ENCODE measurements at regions of chr15 and their contacts with region 1.

Region 1: DNA sequence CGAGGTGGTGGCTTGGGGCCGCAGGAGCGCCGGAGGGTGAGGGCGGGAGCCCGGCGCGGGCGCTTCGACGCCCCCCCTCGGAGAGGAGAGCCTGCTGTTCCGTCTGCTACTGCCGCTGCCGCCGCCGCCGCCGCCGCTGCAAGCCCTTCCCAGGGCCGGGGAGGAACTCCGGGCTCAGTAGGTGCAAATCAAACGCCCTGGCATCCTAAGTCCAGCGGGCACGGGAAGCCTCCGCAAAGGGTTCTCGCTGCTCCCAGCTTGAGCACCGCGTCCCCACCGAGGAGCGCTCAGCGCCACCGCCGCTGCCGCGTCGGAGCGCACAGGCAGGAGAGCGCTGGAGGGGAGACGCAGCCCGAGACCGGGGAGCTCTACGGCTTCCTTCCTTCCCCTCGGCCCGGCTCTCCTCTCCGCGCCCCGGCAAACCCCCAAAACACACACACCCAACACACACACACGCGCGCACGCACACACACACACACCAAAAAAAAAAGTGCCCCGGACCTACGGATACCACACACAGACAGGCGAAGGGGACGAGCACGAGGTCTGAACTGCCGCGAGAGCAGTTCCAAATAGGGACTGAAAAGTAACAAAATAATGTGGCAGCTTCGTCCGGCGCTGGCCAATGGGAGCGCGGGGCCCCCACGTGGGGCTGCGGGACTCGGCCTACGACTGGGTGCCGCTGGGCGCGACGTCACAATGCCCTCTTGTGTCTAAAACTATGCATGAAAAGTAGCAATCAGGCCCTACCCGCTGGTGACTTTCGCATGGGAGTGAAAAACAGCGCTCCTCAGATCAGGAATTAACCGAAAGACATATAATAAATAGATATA is at the start of gene TLE3:
- DNase-seq: peak; percentile 92
- ATAC-seq: peak; percentile 71
- H3K4me3 ChIP-seq: peak within 1 kb of the TSS; percentile 84 to 92
- H3K27ac ChIP-seq: peak within 1 kb of the TSS; percentile 89
- H3K4me1 ChIP-seq: peaks cover 42% of the 10 kb centered on the region
- H3K27me3 ChIP-seq: no peaks in the 10 kb centered on the region
- CTCF ChIP-seq: peak; percentile 52
- total RNA-seq, gene TLE3: 132 TPM

Region 2: GRCh38 chr15:69576035-69576526 is 521.5 kb before region 1 on chr15:
- CTCF ChIA-PET with region 1: no interaction called
- POLR2A ChIA-PET with region 1: no interaction called
- in situ Hi-C with region 1: no loop called
- intact Hi-C with region 1: loop called (anchors 10 kb)
- DNase-seq: no peak
- ATAC-seq: peak; percentile 93
- H3K4me3 ChIP-seq: no peak overlapping the region
- H3K27ac ChIP-seq: peak overlapping the region; percentile 75; the same call in 1 of the 2 replicates
- H3K4me1 ChIP-seq: peaks cover 24% of the 10 kb centered on the region
- H3K27me3 ChIP-seq: no peaks in the 10 kb centered on the region
- CTCF ChIP-seq: peak; percentile 89

Region 3: GRCh38 chr15:70111203-70112073 is 13.9 kb after region 1 on chr15:
- CTCF ChIA-PET with region 1: interaction called, 8 read pairs
- POLR2A ChIA-PET with region 1: no interaction called
- in situ Hi-C with region 1: no loop called
- intact Hi-C with region 1: loop called (anchors 1 kb)
- DNase-seq: no peak
- ATAC-seq: peak; percentile 93
- H3K4me3 ChIP-seq: no peak overlapping the region
- H3K27ac ChIP-seq: peak overlapping the region; percentile 60; the same call in 1 of the 2 replicates
- H3K4me1 ChIP-seq: peaks cover 8% of the 10 kb centered on the region; the same call in 1 of the 2 replicates
- H3K27me3 ChIP-seq: no peaks in the 10 kb centered on the region
- CTCF ChIP-seq: no peak

Region 4: DNA sequence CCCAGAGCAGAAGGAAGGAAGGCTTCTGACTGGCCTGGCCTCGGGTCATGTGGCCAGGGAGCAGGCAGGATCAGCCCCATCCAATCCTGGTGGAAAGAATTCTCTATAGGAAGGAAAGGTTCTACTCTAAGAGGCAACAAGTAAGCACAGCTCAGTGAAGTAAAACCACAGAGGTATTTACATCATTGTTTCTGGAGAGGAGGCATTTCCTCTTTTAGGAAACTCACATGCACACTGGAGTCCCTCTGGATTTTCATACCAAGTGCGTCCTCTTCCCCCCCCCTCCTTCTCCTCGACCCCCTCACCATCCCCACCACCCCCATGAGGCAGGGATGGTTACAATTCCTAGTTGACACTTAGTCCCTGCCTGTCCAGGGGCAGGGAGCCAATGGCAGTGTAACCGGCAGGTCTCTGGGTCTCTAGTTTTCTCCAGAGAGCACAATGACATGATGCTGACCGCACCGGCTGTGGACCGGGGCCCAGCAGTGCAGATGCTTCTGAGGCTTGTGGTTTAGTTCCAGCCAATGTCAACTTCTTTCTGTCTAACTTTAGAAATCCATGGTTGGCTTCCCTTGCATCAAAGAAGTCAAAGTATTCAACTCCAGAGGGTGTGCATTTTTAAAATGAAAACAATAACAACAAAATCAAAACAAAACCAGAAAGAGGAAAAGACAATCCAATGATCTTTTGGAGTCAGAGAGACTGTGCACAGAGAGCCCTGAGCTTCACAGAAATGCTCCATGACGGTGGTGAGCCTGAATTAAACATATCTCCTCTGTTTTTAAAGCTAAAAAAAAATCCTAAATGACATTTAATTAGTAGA is 230.5 kb after region 1 on chr15:
- CTCF ChIA-PET with region 1: no interaction called
- POLR2A ChIA-PET with region 1: no interaction called
- in situ Hi-C with region 1: no loop called
- intact Hi-C with region 1: no loop called
- DNase-seq: no peak
- ATAC-seq: peak; percentile 81
- H3K4me3 ChIP-seq: no peak overlapping the region
- H3K27ac ChIP-seq: 0 out of 2 replicates have a peak overlapping the region, but pooled peaks have one; percentile 3
- H3K4me1 ChIP-seq: peaks cover 23% of the 10 kb centered on the region
- H3K27me3 ChIP-seq: no peaks in the 10 kb centered on the region
- CTCF ChIP-seq: no peak

Region 5: DNA sequence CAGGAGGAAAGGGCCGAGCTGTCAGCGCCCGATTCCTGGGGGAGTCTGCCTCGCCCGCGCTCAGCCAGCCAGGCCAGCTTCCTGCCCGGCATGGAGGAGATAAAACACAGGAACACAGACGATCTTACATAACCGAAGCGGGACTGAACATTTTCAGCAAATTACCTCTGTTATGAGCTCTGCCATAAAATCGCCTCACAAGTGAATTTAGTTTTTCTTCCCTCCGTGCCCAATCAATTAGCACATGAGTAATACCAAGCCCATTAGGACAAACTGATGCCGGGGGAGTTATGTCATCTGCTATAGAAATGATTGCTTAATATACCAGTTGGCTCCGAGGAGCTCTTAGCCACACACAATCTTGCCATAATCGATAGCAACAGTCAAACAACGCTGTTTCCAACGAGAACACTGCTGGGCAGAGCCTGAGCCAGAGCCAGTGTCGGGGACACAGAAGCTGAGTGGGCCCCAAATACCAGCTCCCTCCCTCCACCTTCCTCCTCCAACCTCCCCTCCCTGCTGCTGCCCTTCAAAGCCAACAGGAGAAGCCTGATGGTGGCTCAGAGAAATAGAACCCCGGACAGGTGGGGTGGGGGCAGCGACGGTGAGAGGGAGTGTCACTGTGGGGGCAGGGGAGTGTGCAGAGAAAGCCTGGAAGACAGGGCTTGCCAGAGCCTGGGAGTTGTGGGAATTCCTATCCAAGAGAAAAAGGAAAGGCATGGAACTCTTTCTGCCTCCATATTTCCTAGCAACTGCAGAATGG is 279.6 kb after region 1 on chr15:
- CTCF ChIA-PET with region 1: no interaction called
- POLR2A ChIA-PET with region 1: interaction called, 10 read pairs
- in situ Hi-C with region 1: no loop called
- intact Hi-C with region 1: no loop called
- DNase-seq: no peak
- ATAC-seq: no peak
- H3K4me3 ChIP-seq: peak overlapping the region in 1 of 2 experiments; percentile 17; a peak in 1 of 4 replicates
- H3K27ac ChIP-seq: peak overlapping the region; percentile 57
- H3K4me1 ChIP-seq: peaks cover 44% of the 10 kb centered on the region
- H3K27me3 ChIP-seq: no peaks in the 10 kb centered on the region
- CTCF ChIP-seq: no peak

Region 6: DNA sequence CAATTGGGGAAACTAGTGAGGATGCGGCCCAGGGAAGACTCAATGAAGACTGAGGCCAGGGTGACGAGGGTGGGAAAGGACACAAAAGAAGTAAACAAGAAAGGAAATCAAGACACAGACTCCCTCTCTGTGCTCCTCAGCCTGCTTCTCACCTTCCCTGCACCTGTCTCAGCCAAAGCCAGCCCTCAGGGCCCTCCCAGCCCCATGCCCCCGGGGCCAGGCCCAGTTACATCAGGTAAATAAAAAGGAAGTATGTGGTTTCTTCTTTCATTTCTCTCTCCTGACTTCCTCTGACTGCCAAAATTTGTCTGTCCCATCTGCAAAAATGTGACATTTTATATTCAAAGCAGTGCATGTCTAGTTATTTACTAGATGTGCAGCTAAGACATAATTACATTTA is 337.8 kb after region 1 on chr15:
- CTCF ChIA-PET with region 1: no interaction called
- POLR2A ChIA-PET with region 1: interaction called, 18 read pairs
- in situ Hi-C with region 1: no loop called
- intact Hi-C with region 1: no loop called
- DNase-seq: no peak
- ATAC-seq: no peak
- H3K4me3 ChIP-seq: no peak overlapping the region
- H3K27ac ChIP-seq: peak overlapping the region; percentile 65; the same call in 1 of the 2 replicates
- H3K4me1 ChIP-seq: peaks cover 18% of the 10 kb centered on the region
- H3K27me3 ChIP-seq: no peaks in the 10 kb centered on the region
- CTCF ChIP-seq: no peak

Region 7: GRCh38 chr15:70466895-70467529 is 369.5 kb after region 1 on chr15:
- CTCF ChIA-PET with region 1: interaction called, 6 read pairs
- POLR2A ChIA-PET with region 1: interaction called, 3 read pairs
- in situ Hi-C with region 1: no loop called
- intact Hi-C with region 1: loop called (anchors 10 kb)
- DNase-seq: no peak
- ATAC-seq: peak; percentile 88
- H3K4me3 ChIP-seq: no peak overlapping the region
- H3K27ac ChIP-seq: peak overlapping the region; percentile 99
- H3K4me1 ChIP-seq: peaks cover 45% of the 10 kb centered on the region
- H3K27me3 ChIP-seq: no peaks in the 10 kb centered on the region
- CTCF ChIP-seq: peak; percentile 88

Region 8: DNA sequence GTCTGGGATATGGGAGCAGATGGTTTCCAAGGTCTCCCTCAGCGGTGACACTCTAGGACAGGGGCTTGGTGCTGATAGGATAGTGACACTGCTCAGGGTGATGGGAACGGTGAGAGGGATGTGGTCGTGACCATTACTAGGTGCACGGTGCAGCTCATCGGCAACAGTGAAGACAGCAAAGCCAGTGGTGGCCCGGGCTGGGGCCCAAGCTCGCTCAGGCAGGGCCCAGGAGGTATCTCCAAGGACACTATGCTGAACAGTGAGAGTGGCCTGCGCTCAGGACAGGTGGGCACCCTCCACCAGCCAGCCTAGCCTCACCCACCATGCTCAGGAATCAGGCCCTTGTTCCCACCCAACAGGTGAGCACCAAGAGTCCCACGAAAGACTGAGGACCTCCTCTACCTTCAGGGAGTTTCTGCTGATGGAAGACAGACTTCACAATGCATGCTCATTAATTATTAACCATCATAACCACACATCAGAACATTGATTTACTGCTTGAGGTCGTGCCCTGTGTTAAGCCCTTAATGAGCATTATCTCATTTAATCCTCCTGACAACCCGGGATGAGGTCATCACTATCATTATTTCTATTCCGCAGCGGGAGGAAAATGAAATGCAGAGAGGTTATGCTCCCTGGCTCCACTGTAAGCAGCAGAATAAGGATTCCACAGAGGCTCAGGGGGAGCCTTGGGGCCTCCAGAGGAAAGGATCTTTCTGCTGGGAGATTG is 396.4 kb after region 1 on chr15:
- CTCF ChIA-PET with region 1: no interaction called
- POLR2A ChIA-PET with region 1: interaction called, 12 read pairs
- in situ Hi-C with region 1: no loop called
- intact Hi-C with region 1: no loop called
- DNase-seq: no peak
- ATAC-seq: peak; percentile 8
- H3K4me3 ChIP-seq: no peak overlapping the region
- H3K27ac ChIP-seq: peak overlapping the region; percentile 92
- H3K4me1 ChIP-seq: peaks cover 69% of the 10 kb centered on the region
- H3K27me3 ChIP-seq: no peaks in the 10 kb centered on the region
- CTCF ChIP-seq: no peak

Region 9: DNA sequence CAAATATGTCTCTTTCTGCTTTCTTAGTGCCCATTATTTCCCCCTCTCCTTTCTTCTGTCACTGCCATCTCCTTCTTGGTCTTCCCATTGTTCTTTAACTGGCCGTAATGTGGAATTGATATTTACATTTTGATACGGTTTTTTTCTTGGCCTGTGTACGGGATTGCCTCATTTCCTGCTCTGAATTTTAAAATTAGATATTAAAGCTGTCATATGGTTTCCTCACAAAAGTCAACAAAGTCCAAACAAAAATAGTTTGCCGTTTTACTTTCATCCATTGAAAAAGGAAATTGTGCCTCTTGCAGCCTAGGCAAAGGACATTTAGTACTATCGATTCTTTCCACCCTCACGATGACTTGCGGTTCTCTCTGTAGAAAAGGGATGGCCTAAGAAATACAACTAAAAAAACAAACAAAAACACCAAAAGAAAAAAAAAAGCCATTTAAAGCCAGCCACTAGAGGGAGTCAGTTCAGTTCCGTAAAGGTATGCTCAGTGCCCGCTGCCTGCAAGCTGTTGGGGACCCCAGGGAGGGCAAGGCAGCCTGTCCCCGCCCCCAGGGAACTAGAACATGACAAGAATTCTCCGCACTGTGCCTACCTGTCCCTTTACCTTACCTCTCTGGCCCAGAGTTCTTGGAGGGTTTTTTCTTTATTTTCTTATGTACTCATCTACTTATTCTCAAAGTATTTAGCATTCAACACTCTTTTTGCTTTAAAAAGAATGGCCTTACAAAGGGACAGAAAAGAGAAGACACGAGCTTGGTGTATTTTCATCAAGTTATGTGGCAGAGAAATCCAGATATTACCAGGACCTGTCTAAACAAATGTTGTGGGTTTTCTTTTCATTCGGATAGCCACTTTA is 1682.8 kb after region 1 on chr15:
- CTCF ChIA-PET with region 1: no interaction called
- POLR2A ChIA-PET with region 1: no interaction called
- in situ Hi-C with region 1: no loop called
- intact Hi-C with region 1: no loop called
- DNase-seq: no peak
- ATAC-seq: no peak
- H3K4me3 ChIP-seq: no peak overlapping the region
- H3K27ac ChIP-seq: 0 out of 2 replicates have a peak overlapping the region, but pooled peaks have one; percentile 7
- H3K4me1 ChIP-seq: peaks cover 6% of the 10 kb centered on the region; the same call in 1 of the 2 replicates
- H3K27me3 ChIP-seq: no peaks in the 10 kb centered on the region
- CTCF ChIP-seq: peak; percentile 90

Measured in Panc1 (cell line).